B cell (primary cell): ENCODE measurements at regions of chr2 and their contacts with region 1.

Region 1: GRCh38 chr2:233026192-233026813 is 6.2 kb upstream of the NEU2 start:
- DNase-seq: no peak
- ATAC-seq: no peak
- H3K4me3 ChIP-seq: no peak overlapping the region
- H3K4me3 Mint-ChIP-seq: no peak overlapping the region
- H3K27ac ChIP-seq: no peak overlapping the region
- H3K27ac Mint-ChIP-seq: no peak overlapping the region
- H3K4me1 ChIP-seq: no peaks in the 10 kb centered on the region
- H3K4me1 Mint-ChIP-seq: no peaks in the 10 kb centered on the region
- H3K27me3 ChIP-seq: no peaks in the 10 kb centered on the region
- H3K27me3 Mint-ChIP-seq: no peaks in the 10 kb centered on the region
- CTCF ChIP-seq: no peak

Region 2: DNA sequence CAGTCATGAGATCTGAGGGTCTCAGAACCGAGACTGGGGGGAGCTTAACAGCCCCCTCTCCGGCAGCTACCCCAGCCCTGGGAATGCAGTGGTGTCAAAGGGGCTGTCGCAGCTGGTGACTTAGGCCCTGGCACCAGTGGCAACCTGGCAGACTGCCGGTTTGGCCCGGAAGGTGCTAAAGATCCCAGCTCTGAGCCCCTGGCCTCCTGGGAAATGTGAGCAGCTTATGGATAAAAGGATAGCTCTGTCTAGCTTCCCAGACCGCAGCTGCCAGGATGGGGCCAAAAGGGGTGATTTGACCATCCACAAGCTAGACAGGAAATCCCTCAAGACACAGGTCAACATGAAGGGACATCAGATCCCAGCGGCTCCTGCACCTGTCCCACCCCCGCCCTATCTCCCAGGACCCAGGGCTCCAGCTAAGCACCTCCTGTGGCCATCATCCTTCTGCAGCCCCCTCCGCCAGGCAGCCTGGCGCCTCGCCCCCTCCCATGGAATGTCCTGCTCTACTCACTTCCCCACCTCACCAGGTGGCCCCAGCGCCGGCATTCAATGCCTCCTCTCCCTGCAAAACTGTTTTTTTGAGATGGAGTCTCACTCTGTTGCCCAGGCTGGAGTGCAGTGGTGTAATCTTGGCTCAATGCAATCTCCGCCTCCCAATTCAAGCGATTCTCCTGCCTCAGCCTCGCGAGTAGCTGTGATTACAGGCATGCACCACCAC is 426.1 kb before region 1 on chr2:
- CTCF ChIA-PET with region 1: interaction called, 5 read pairs
- POLR2A ChIA-PET with region 1: no interaction called
- intact Hi-C with region 1: loop called (anchors 10 kb)
- DNase-seq: no peak
- ATAC-seq: no peak
- H3K4me3 ChIP-seq: no peak overlapping the region
- H3K4me3 Mint-ChIP-seq: no peak overlapping the region
- H3K27ac ChIP-seq: no peak overlapping the region
- H3K27ac Mint-ChIP-seq: no peak overlapping the region
- H3K4me1 ChIP-seq: no peaks in the 10 kb centered on the region
- H3K4me1 Mint-ChIP-seq: no peaks in the 10 kb centered on the region
- H3K27me3 ChIP-seq: no peaks in the 10 kb centered on the region
- H3K27me3 Mint-ChIP-seq: peaks cover 11% of the 10 kb centered on the region
- CTCF ChIP-seq: no peak

Region 3: DNA sequence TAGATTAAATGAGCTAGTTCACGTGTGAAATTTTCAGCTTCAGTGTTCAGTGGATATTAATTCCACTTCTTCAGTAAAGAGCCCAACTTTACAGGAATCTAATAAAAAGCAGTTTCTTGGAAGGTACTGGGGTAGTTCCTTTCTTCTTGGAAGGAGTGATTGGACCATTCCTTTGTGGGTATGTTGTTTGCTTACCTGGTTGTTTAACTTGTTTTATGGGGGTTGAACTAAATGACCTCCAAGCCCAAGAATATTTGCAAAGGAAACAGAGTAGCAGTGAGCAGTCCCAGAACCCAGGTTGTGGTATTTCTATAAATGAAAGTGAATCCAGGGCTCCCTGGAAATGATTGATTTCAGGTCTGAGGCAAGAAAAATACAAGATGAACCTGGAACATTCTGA is 281.3 kb before region 1 on chr2:
- CTCF ChIA-PET with region 1: no interaction called
- POLR2A ChIA-PET with region 1: no interaction called
- intact Hi-C with region 1: no loop called
- DNase-seq: no peak
- ATAC-seq: no peak
- H3K4me3 ChIP-seq: no peak overlapping the region
- H3K4me3 Mint-ChIP-seq: no peak overlapping the region
- H3K27ac ChIP-seq: no peak overlapping the region
- H3K27ac Mint-ChIP-seq: no peak overlapping the region
- H3K4me1 ChIP-seq: no peaks in the 10 kb centered on the region
- H3K4me1 Mint-ChIP-seq: peaks cover 2% of the 10 kb centered on the region
- H3K27me3 ChIP-seq: no peaks in the 10 kb centered on the region
- H3K27me3 Mint-ChIP-seq: no peaks in the 10 kb centered on the region
- CTCF ChIP-seq: no peak

Region 4: DNA sequence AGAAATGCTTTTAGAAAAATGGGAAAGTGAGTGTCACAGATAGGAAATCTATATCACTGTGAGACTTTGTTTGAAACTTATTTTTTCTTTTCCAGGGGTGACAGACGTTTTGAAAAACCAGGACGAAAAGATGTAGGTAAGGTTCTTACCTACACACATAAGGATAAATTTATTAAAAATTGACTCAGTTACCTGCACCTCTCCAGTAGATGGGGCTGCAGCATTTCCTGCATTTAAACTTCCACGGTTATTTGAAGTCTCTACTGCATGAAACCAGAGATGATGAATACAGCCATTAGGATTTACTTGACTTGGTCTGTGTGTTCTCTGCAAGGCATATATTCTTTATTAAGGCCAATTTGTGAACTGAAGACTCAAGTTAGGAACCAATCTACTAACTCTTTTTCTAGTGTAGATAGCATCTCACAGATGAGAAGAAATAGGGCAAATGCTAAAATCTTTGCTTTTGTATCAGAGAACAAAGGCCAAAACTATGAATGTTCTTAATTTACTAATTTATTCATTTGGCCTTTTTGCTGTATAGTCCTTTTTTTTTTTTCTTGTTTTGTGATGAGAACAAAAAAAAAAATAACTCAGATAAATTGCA is 264.9 kb before region 1 on chr2:
- CTCF ChIA-PET with region 1: interaction called, 7 read pairs
- POLR2A ChIA-PET with region 1: no interaction called
- intact Hi-C with region 1: loop called (anchors 5 kb)
- DNase-seq: peak; percentile 56
- ATAC-seq: no peak
- H3K4me3 ChIP-seq: no peak overlapping the region
- H3K4me3 Mint-ChIP-seq: no peak overlapping the region
- H3K27ac ChIP-seq: no peak overlapping the region
- H3K27ac Mint-ChIP-seq: no peak overlapping the region
- H3K4me1 ChIP-seq: no peaks in the 10 kb centered on the region
- H3K4me1 Mint-ChIP-seq: no peaks in the 10 kb centered on the region
- H3K27me3 ChIP-seq: no peaks in the 10 kb centered on the region
- H3K27me3 Mint-ChIP-seq: no peaks in the 10 kb centered on the region
- CTCF ChIP-seq: peak; percentile 77

Region 5: DNA sequence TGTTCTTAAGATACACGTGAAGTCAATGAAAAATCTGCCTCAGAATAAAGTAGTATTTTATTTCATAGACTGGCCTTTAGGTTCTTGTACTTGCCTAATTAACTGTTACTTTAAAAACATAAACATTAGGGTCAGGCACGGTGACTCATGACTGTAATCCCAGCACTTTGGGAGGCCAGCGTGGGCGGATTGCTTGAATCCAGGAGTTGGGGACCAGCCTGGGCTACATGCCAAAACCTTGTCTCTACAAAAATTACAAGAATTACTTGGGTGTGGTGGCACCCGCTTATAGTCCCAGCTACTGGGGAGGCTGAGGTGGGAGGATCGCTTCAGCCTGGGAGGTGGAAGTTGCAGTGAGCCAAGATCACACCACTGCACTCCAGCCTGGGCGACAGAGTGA is 172.2 kb before region 1 on chr2:
- CTCF ChIA-PET with region 1: interaction called, 39 read pairs
- POLR2A ChIA-PET with region 1: no interaction called
- intact Hi-C with region 1: loop called (anchors 1 kb)
- DNase-seq: no peak
- ATAC-seq: no peak
- H3K4me3 ChIP-seq: no peak overlapping the region
- H3K4me3 Mint-ChIP-seq: no peak overlapping the region
- H3K27ac ChIP-seq: no peak overlapping the region
- H3K27ac Mint-ChIP-seq: no peak overlapping the region
- H3K4me1 ChIP-seq: no peaks in the 10 kb centered on the region
- H3K4me1 Mint-ChIP-seq: no peaks in the 10 kb centered on the region
- H3K27me3 ChIP-seq: no peaks in the 10 kb centered on the region
- H3K27me3 Mint-ChIP-seq: no peaks in the 10 kb centered on the region
- CTCF ChIP-seq: no peak

Region 6: GRCh38 chr2:232955856-232956255 is 70.4 kb before region 1 on chr2:
- CTCF ChIA-PET with region 1: interaction called, 8 read pairs
- POLR2A ChIA-PET with region 1: no interaction called
- intact Hi-C with region 1: loop called (anchors 1 kb)
- DNase-seq: peak; percentile 77
- ATAC-seq: peak; percentile 90
- H3K4me3 ChIP-seq: peak overlapping the region in 1 of 5 experiments; percentile 0
- H3K4me3 Mint-ChIP-seq: peak overlapping the region; percentile 52
- H3K27ac ChIP-seq: peak overlapping the region; percentile 71 to 83
- H3K27ac Mint-ChIP-seq: peak overlapping the region; percentile 86
- H3K4me1 ChIP-seq: peaks cover 42 to 46% of the 10 kb centered on the region in 2 donors
- H3K4me1 Mint-ChIP-seq: peaks cover 44% of the 10 kb centered on the region
- H3K27me3 ChIP-seq: no peaks in the 10 kb centered on the region
- H3K27me3 Mint-ChIP-seq: no peaks in the 10 kb centered on the region
- CTCF ChIP-seq: no peak